Right ventricle myocardium inferior (tissue), 1 donor: ENCODE measurements at regions of chr4 and their contacts with region 1.

Region 1: GRCh38 chr4:71229477-71230270 is 109.1 kb upstream of the SLC4A4 start:
- DNase-seq: no peak
- ATAC-seq: peak; percentile 50

Region 2: GRCh38 chr4:71186566-71187403 is 42.9 kb before region 1 on chr4:
- intact Hi-C with region 1: loop called (anchors 2 kb)
- DNase-seq: peak; percentile 77
- ATAC-seq: peak; percentile 97

Region 3: GRCh38 chr4:71259911-71260331 is 30.2 kb after region 1 on chr4:
- intact Hi-C with region 1: loop called (anchors 2 kb)
- DNase-seq: no peak
- ATAC-seq: peak; percentile 67

Region 4: DNA sequence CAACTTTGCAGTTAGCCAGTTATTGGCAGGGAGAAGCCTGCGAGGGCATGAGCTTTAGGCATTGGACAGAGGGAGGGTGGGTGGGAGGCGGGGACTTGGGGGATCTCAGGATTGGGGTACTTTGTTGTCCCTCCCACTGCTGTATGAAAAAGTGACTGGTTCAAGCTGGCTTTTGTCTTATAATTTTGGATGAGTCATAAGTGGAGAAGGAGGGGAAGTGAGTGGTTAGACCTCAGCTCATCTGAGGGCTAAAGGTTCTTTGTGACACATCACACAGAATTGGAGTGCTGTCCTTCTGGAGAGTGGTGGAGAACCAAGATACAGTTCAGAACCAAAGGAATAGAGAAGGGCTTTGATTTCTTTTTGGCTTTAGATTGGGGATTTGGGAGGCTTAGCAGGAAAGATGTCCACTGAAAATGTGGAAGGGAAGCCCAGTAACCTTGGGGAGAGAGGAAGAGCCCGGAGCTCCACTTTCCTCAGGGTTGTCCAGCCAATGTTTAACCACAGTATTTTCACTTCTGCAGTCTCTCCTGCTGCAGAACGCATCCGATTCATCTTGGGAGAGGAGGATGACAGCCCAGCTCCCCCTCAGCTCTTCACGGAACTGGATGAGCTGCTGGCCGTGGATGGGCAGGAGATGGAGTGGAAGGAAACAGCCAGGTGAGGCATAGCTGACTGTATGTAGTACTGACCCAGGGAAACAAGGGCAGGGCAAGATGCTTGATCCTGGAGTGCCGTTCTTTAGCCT is 109.3 kb after region 1 on chr4 and contains the start of gene SLC4A4:
- intact Hi-C with region 1: no loop called
- DNase-seq: no peak
- ATAC-seq: no peak
- total RNA-seq, gene SLC4A4: 20.3 TPM

Region 5: DNA sequence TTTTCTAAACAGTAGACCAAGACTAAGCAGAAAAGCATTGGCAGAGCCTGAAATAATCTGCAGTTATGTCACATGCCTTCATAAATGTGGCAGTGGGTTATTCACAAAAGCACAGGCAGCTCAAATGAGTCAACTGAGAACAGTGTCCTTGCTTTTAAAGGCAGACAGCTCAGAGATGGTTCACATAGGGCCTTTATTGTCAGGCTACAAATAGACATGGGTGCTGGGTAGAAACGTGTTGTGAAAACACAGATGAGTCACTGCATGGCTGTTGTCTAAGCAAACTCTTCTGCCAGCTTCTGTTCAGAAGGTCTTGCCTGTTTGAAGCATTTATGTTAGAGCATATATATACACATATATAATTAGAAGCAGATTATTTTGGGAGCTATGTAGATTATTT is 227.2 kb after region 1 on chr4:
- intact Hi-C with region 1: loop called (anchors 10 kb)
- DNase-seq: no peak
- ATAC-seq: peak; percentile 85

Region 6: GRCh38 chr4:71553605-71554004 is 323.9 kb after region 1 on chr4:
- intact Hi-C with region 1: loop called (anchors 5 kb)
- DNase-seq: no peak
- ATAC-seq: peak; percentile 52